Panc1 (cell line): ENCODE measurements at regions of chr12 and their contacts with region 1.

Region 1: GRCh38 chr12:123655420-123655819 is 15.5 kb upstream of the TCTN2 start:
- DNase-seq: no peak
- ATAC-seq: no peak
- H3K4me3 ChIP-seq: no peak overlapping the region
- H3K27ac ChIP-seq: no peak overlapping the region
- H3K4me1 ChIP-seq: no peaks in the 10 kb centered on the region
- H3K27me3 ChIP-seq: no peaks in the 10 kb centered on the region
- CTCF ChIP-seq: no peak

Region 2: GRCh38 chr12:123427036-123427769 is 228.2 kb before region 1 on chr12:
- CTCF ChIA-PET with region 1: no interaction called
- POLR2A ChIA-PET with region 1: interaction called, 11 read pairs
- in situ Hi-C with region 1: no loop called
- intact Hi-C with region 1: no loop called
- DNase-seq: no peak
- ATAC-seq: no peak
- H3K4me3 ChIP-seq: no peak overlapping the region
- H3K27ac ChIP-seq: no peak overlapping the region
- H3K4me1 ChIP-seq: no peaks in the 10 kb centered on the region
- H3K27me3 ChIP-seq: no peaks in the 10 kb centered on the region
- CTCF ChIP-seq: no peak

Region 3: DNA sequence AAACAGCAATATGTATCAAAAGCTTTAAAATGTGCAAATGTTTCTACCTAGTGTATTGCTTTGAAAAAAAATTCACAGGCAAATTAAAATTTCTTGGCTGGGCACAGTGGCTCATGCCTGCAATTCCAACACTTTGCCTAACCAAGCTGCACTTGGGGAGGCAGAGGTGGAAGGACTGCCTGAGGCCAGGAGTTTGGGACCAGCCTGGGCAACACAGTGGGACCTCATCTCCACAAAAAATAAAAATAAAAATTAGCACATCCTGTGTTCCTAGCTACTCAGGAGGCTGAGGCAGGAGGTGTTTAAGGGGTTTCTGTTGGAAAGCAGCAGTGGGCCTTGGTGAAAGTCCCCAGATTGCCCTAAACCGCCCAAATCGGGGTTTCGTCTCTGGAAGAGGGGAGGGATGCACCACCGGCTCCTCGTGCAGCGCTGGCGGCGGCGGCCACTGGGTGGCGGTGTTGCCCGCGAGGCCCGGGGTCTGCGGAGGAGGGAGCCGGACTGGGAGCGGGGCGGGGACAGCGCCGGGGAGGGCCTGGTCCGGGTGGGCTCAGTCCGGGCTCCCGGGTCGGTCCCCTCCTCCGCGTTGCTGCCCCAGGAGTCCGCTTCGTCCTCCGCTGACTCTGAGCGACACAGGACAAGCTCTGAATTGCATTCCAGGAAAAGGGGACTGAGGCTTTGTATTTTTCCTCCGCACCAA is 1675.4 kb after region 1 on chr12:
- CTCF ChIA-PET with region 1: no interaction called
- POLR2A ChIA-PET with region 1: interaction called, 10 read pairs
- in situ Hi-C with region 1: no loop called
- intact Hi-C with region 1: no loop called
- DNase-seq: no peak
- ATAC-seq: peak; percentile 98
- H3K4me3 ChIP-seq: peak overlapping the region; percentile 36 to 69
- H3K27ac ChIP-seq: no peak overlapping the region
- H3K4me1 ChIP-seq: no peaks in the 10 kb centered on the region
- H3K27me3 ChIP-seq: peaks cover 4% of the 10 kb centered on the region
- CTCF ChIP-seq: peak; percentile 99